Activated CD4-positive, alpha-beta T cell treated with anti-CD3 and anti-CD28 coated beads, Interleukin-2, amount 10 ng/mL, durations not matched to agents 24 days and 14 days (primary cell): ENCODE measurements at regions of chr2 and their contacts with region 1.

Region 1: GRCh38 chr2:195559431-195559914 is 97.6 kb upstream of the SLC39A10 start:
- DNase-seq: peak; percentile 95
- H3K4me3 Mint-ChIP-seq: peak overlapping the region; percentile 81
- H3K27ac Mint-ChIP-seq: peak overlapping the region; percentile 97
- H3K4me1 Mint-ChIP-seq: peaks cover 51% of the 10 kb centered on the region
- H3K27me3 Mint-ChIP-seq: no peaks in the 10 kb centered on the region

Region 2: GRCh38 chr2:195364015-195364965 is 195.2 kb before region 1 on chr2:
- intact Hi-C with region 1: loop called (anchors 5 kb)
- DNase-seq: no peak
- H3K4me3 Mint-ChIP-seq: no peak overlapping the region
- H3K27ac Mint-ChIP-seq: peak overlapping the region; percentile 40
- H3K4me1 Mint-ChIP-seq: peaks cover 21% of the 10 kb centered on the region
- H3K27me3 Mint-ChIP-seq: no peaks in the 10 kb centered on the region

Region 3: GRCh38 chr2:195477248-195477995 is 82.1 kb before region 1 on chr2:
- intact Hi-C with region 1: loop called (anchors 2 kb)
- DNase-seq: no peak
- H3K4me3 Mint-ChIP-seq: no peak overlapping the region
- H3K27ac Mint-ChIP-seq: peak overlapping the region; percentile 65
- H3K4me1 Mint-ChIP-seq: peaks cover 36% of the 10 kb centered on the region
- H3K27me3 Mint-ChIP-seq: no peaks in the 10 kb centered on the region

Region 4: DNA sequence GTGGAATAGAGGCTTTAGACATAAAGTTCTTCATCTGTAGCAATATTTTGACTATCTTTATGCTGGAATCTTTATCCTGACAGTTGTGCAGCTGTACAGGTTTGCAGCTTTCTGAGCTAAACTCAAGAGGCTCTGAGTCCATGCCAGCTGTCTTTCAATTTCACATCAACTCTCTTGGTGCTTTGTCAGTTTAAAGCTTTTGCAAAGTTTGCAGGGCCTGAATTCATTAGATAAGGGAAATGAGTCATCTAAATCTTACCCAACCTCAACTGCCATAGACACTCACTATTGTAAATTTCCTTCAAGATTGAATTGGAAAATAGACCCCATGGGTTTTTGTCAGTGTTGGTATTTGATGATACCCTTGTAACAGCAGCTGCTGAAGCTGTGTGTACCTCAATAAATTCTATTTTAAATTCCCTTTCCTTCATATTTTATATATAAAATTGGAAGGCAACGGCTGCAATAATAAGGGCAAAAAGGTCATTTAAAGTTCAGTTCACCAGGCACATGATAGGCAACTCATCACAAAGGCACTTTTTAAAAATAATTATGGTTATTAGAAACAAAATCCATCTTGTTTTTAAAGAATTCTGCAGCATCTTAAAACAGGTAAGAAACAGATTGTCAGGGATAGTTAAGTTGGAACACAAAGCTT is 72.4 kb before region 1 on chr2:
- intact Hi-C with region 1: loop called (anchors 1 kb)
- DNase-seq: peak; percentile 77
- H3K4me3 Mint-ChIP-seq: peak overlapping the region; percentile 64
- H3K27ac Mint-ChIP-seq: peak overlapping the region; percentile 68
- H3K4me1 Mint-ChIP-seq: peaks cover 29% of the 10 kb centered on the region
- H3K27me3 Mint-ChIP-seq: no peaks in the 10 kb centered on the region

Region 5: DNA sequence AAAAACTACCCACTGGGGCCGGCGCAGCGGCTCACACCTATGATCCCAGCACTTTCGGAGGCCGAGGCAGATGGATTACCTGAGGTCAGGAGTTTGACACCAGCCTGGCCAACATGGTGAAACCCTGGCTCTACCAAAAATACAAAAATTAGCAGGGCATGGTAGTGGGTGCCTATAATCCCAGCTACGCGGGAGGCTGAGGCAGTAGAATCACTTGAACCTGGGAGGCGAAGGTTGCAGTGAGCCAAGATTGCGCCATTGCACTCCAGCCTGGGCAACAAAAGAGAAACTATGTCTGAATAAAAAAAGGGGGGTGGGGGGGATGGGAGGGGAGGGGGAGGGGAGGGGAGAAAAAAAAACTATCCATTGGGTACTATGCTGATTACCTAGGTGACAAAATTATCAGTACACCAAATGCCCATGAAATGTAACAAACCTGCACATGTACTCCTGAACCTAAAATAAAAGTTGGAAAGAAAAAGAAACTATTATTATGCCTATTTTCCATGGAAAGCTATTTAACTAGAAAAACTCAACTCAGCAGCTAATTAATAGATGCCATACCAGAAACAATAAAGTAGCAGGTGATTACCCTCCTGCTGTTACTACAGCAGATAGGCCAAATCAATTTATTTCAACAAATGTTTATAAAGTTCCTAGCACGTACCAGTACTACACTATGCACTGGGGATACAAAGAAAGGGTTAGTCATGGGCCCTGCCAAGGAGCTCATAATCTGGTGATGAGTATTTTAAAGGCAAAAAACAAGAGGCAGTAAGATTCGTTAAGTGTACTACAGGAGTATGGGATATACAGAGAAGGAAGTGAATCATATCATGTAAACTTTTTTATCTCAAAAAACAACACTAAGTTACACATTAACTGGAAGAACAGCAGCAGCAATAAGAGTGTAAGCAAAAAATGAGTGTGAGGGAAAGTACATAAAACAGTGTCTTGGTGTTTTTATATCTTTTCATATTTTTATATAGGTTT is 15.3 kb before region 1 on chr2:
- intact Hi-C with region 1: loop called (anchors 1 kb)
- DNase-seq: peak; percentile 75
- H3K4me3 Mint-ChIP-seq: peak overlapping the region; percentile 29
- H3K27ac Mint-ChIP-seq: peak overlapping the region; percentile 91
- H3K4me1 Mint-ChIP-seq: peaks cover 67% of the 10 kb centered on the region
- H3K27me3 Mint-ChIP-seq: no peaks in the 10 kb centered on the region

Region 6: GRCh38 chr2:195575879-195576401 is 16.5 kb after region 1 on chr2:
- intact Hi-C with region 1: loop called (anchors 1 kb)
- DNase-seq: no peak
- H3K4me3 Mint-ChIP-seq: peak overlapping the region; percentile 37
- H3K27ac Mint-ChIP-seq: peak overlapping the region; percentile 40
- H3K4me1 Mint-ChIP-seq: peaks cover 49% of the 10 kb centered on the region
- H3K27me3 Mint-ChIP-seq: no peaks in the 10 kb centered on the region

Region 7: GRCh38 chr2:196149948-196150347 is 590.5 kb after region 1 on chr2:
- intact Hi-C with region 1: loop called (anchors 5 kb)
- DNase-seq: peak; percentile 53
- H3K4me3 Mint-ChIP-seq: peak overlapping the region; percentile 70
- H3K27ac Mint-ChIP-seq: peak overlapping the region; percentile 90
- H3K4me1 Mint-ChIP-seq: peaks cover 75% of the 10 kb centered on the region
- H3K27me3 Mint-ChIP-seq: no peaks in the 10 kb centered on the region